HEK293 (cell line): ENCODE measurements at regions of chr16 and their contacts with region 1.

Region 1: GRCh38 chr16:82263521-82264143 is 93.6 kb upstream of the MPHOSPH6 start:
- H3K4me3 ChIP-seq: no peak overlapping the region
- H3K27ac ChIP-seq: no peak overlapping the region
- H3K4me1 ChIP-seq: no peaks in the 10 kb centered on the region
- CTCF ChIP-seq: peak; percentile 76

Region 2: GRCh38 chr16:82016263-82016662 is 247.4 kb before region 1 on chr16:
- CTCF ChIA-PET with region 1: no interaction called
- POLR2A ChIA-PET with region 1: no interaction called
- H3K4me3 ChIP-seq: no peak overlapping the region
- H3K27ac ChIP-seq: no peak overlapping the region
- H3K4me1 ChIP-seq: no peaks in the 10 kb centered on the region
- CTCF ChIP-seq: no peak

Region 3: GRCh38 chr16:82192665-82193064 is 71.0 kb before region 1 on chr16:
- CTCF ChIA-PET with region 1: no interaction called
- POLR2A ChIA-PET with region 1: no interaction called
- H3K4me3 ChIP-seq: no peak overlapping the region
- H3K27ac ChIP-seq: no peak overlapping the region
- H3K4me1 ChIP-seq: no peaks in the 10 kb centered on the region
- CTCF ChIP-seq: no peak

Region 4: DNA sequence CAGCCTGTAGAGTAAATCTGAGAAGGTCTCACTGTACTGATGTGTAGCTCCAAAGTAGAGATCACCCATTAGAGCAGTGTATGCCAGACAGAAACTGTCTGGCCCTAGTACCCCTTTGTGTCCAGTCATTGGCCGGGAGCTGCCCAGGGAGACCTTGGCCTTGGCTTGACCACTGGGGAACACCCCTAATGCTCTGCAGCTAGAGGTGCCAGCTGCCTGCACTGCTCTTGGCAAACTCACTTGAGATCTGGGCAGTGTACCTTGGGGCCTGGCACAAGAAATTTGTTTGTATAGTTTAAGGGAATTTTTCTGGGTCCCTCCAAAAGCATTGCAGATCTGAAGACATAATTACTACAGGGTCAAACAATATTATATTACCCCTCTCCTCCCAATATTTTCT is 15.0 kb before region 1 on chr16:
- CTCF ChIA-PET with region 1: interaction called, 25 read pairs
- POLR2A ChIA-PET with region 1: no interaction called
- H3K4me3 ChIP-seq: no peak overlapping the region
- H3K27ac ChIP-seq: no peak overlapping the region
- H3K4me1 ChIP-seq: no peaks in the 10 kb centered on the region
- CTCF ChIP-seq: no peak

Region 5: GRCh38 chr16:82344157-82344556 is 80.5 kb after region 1 on chr16:
- CTCF ChIA-PET with region 1: interaction called, 62 read pairs
- POLR2A ChIA-PET with region 1: no interaction called
- H3K4me3 ChIP-seq: no peak overlapping the region
- H3K27ac ChIP-seq: no peak overlapping the region
- H3K4me1 ChIP-seq: no peaks in the 10 kb centered on the region
- CTCF ChIP-seq: no peak

Region 6: DNA sequence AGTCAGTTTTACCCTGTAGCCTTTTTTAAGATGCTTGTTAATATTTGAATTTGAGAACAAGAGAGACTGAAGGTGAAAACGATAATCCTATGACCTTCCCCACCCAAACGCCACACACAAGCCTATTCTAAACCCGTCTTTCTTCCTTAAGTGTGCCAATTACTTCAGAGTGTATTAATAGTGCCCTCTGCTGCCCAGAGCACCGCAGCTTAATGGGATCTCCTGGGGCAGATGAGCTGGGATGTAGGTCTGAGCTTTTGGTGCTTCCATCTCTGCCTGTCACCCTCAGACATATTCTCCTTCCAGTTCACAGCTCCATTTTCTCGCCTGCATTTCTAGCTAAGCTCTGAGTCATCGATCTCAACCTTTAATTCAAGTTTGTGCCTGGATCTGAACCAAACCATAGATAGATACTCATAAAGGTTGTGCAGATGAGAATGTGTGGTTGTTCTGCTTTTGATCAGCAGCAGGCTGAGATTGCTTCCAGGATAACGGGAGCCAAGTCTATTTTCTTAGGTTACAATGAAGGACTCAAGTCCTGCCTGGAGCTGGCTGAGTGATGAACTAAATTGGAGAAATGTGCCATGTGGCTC is 316.8 kb after region 1 on chr16:
- CTCF ChIA-PET with region 1: interaction called, 15 read pairs
- POLR2A ChIA-PET with region 1: no interaction called
- H3K4me3 ChIP-seq: no peak overlapping the region
- H3K27ac ChIP-seq: no peak overlapping the region
- H3K4me1 ChIP-seq: no peaks in the 10 kb centered on the region
- CTCF ChIP-seq: no peak

Region 7: GRCh38 chr16:82630688-82631087 is 367.1 kb after region 1 on chr16:
- CTCF ChIA-PET with region 1: interaction called, 13 read pairs
- POLR2A ChIA-PET with region 1: no interaction called
- H3K4me3 ChIP-seq: no peak overlapping the region
- H3K27ac ChIP-seq: no peak overlapping the region
- H3K4me1 ChIP-seq: no peaks in the 10 kb centered on the region
- CTCF ChIP-seq: no peak

Region 8: GRCh38 chr16:82639666-82640336 is 376.2 kb after region 1 on chr16:
- CTCF ChIA-PET with region 1: interaction called, 24 read pairs
- POLR2A ChIA-PET with region 1: no interaction called
- H3K4me3 ChIP-seq: no peak overlapping the region
- H3K27ac ChIP-seq: no peak overlapping the region
- H3K4me1 ChIP-seq: no peaks in the 10 kb centered on the region
- CTCF ChIP-seq: peak; percentile 39; the same call in 1 of the 2 replicates

Region 9: DNA sequence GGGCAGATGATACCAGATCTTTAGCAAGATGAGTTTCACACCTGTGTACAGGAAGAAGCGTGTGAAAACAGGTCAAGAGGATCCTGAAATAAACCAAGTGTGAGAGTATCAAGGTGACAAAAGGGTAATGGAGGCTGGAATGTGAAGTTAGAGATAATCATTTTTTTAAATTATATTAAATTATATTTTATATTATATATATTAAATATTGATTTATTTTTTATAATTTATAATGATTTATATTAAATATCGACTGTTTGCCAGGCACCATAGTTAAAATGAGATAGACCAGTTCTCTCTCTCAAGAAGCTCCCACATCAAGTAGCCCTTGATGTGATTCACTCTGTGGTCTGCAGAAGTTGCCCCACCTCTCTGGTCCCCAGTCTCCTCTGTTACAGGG is 1183.9 kb after region 1 on chr16:
- CTCF ChIA-PET with region 1: interaction called, 14 read pairs
- POLR2A ChIA-PET with region 1: no interaction called
- H3K4me3 ChIP-seq: no peak overlapping the region
- H3K27ac ChIP-seq: no peak overlapping the region
- H3K4me1 ChIP-seq: no peaks in the 10 kb centered on the region
- CTCF ChIP-seq: no peak